Dendritic cell treated with granulocyte-macrophage colony-stimulating factor and Interleukin-4, amounts not matched to agents 40 ng/mL and 50 ng/mL, for 4 days (primary cell): ENCODE measurements at regions of chr1 and their contacts with region 1.

Region 1: DNA sequence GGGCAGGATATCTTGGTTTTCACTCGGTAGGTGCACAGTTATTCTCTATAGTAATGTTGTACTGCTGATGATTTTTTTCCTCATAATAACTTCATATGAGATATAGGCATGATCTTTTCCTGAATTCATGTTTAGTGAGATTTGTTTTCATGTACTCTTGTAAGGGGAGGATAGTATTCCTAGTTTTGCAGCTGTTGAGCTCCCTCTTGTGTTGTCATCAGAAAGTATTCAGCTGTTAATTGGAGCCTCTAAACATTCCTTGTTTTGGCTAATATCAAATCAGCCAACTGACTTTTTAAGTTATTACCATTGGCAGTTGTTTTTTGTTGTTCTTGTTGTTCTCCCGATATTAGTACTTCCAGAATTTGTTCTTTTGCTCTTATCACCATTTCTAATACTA is 24.4 kb downstream of the OR10R2 start:
- H3K4me3 Mint-ChIP-seq: no peak overlapping the region
- H3K27ac Mint-ChIP-seq: no peak overlapping the region
- H3K4me1 Mint-ChIP-seq: peaks cover 12% of the 10 kb centered on the region
- H3K27me3 Mint-ChIP-seq: peaks cover 4% of the 10 kb centered on the region

Region 2: DNA sequence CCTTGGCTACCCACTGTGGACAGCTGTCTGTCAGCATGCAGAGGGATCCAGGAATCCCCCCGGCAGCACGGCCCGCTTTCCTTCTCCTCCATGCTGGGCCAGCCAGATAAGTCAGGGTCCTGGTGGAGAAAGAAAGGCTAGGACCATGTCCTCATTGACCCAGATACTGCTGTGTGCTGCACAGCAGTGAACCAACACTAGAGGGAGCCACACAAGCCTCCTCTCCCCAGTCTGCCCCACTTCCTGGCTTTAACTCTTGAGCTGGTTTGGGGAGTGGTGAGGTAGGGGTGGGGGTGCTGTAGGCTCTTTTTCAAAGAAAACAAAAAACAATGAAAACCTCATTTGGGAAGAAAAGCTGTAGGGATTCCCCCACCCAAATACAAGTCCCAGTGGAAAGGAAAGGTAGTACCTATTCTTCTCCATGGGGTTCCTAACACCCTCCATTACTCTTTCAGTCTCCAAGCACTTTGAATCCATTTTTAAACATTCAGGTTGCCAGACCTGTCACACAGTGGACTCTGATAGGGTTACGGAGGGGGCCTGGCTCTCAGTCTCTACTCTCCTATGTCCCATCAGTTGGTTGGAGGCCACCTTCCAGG is 400.5 kb before region 1 on chr1:
- intact Hi-C with region 1: loop called (anchors 10 kb)
- H3K4me3 Mint-ChIP-seq: no peak overlapping the region
- H3K27ac Mint-ChIP-seq: no peak overlapping the region
- H3K4me1 Mint-ChIP-seq: no peaks in the 10 kb centered on the region
- H3K27me3 Mint-ChIP-seq: peaks cover 6% of the 10 kb centered on the region

Region 3: DNA sequence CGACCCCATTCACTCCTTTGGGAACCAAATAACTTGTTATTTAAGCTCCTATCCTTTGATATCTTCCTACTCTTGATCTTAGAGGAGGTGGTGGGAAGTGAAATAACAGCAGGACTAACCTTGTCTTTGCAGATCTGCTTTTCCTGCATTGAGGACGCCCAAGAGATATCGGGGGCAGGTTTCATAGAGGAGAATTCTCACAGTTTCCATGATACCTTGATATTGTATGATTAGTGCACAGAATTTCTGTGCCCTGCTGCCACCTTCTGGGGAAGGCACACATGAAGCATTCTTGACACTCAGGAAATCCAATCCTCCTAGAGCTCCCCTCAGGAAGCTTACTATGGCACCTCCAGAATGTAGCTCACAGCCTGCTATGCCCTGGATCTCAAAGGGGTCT is 166.6 kb before region 1 on chr1:
- intact Hi-C with region 1: loop called (anchors 10 kb)
- H3K4me3 Mint-ChIP-seq: no peak overlapping the region
- H3K27ac Mint-ChIP-seq: no peak overlapping the region
- H3K4me1 Mint-ChIP-seq: peaks cover 22% of the 10 kb centered on the region
- H3K27me3 Mint-ChIP-seq: no peaks in the 10 kb centered on the region

Region 4: GRCh38 chr1:158978730-158979129 is 482.4 kb after region 1 on chr1:
- intact Hi-C with region 1: no loop called
- H3K4me3 Mint-ChIP-seq: no peak overlapping the region
- H3K27ac Mint-ChIP-seq: no peak overlapping the region
- H3K4me1 Mint-ChIP-seq: no peaks in the 10 kb centered on the region
- H3K27me3 Mint-ChIP-seq: no peaks in the 10 kb centered on the region

Region 5: DNA sequence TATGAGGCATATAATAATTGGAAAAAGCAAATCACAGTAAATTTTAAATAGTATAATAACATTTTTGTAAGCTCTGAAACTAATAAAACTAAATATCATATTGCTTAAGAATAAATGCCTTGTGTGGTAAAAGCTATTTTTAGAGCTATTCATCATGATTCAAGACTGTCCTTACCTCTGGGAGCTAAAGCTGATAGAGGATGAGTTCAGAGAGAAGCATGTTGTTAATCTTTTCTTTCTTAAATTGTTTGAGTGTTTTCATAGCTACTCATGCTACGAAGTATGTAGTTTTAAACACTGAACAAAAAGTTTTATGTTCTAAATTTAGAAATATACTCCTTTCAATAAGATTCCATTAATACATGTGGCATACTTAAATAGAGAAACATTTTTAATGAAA is 543.8 kb after region 1 on chr1:
- intact Hi-C with region 1: no loop called
- H3K4me3 Mint-ChIP-seq: no peak overlapping the region
- H3K27ac Mint-ChIP-seq: no peak overlapping the region
- H3K4me1 Mint-ChIP-seq: peaks cover 5% of the 10 kb centered on the region
- H3K27me3 Mint-ChIP-seq: no peaks in the 10 kb centered on the region